ENCODE measurements at regions of chr17 and their contacts with region 1.

Region 1: DNA sequence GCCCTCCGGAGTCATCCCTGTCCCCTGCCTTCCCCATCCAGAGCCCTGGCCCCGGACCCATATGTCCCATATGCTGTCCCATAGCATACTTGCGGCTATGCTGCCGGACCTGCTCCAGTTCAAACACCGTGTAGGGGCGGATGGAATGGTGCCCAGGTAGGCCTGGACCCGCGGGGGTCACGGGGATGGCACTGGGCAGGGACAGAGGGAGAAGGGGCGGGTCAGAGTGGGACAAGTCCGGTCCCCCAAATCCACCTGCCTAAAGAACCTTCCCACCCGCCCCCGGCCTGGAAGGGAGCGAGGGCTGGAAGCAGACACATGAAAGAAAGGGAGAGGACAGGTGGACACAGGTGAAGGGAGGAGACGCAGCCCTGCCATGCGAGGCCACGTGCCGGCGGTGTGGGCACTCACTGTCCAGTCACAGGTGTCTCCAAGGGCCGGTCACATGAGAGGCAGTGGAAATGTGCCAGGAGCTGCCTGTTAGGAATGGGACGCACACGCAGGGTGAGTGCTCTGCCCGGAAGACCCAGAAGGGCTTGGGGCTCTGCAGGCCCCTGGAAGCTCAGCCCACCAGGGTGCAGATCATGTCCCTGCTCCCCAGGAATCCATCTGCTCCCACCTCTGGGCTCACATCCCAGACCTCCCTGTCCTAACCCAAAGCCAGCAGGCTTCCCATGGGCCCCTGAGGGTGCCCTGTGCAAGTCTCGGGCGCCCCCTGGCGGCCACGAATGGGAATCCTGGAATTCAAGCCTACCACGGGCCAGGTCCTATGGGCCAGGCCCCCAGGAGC is 14.0 kb downstream of the UBALD2 start:
- DNase-seq: peak; percentile 82
- H3K4me3 Mint-ChIP-seq: no peak overlapping the region
- H3K27ac Mint-ChIP-seq: no peak overlapping the region
- H3K4me1 Mint-ChIP-seq: peaks cover 6% of the 10 kb centered on the region
- H3K27me3 Mint-ChIP-seq: no peaks in the 10 kb centered on the region
- CTCF ChIP-seq: peak; percentile 96

Region 2: GRCh38 chr17:76014184-76014924 is 264.8 kb before region 1 on chr17:
- CTCF ChIA-PET with region 1: interaction called, 12 read pairs
- POLR2A ChIA-PET with region 1: interaction called, 4 read pairs
- intact Hi-C with region 1: loop called (anchors 1 kb)
- DNase-seq: peak; percentile 63
- H3K4me3 Mint-ChIP-seq: no peak overlapping the region
- H3K27ac Mint-ChIP-seq: no peak overlapping the region
- H3K4me1 Mint-ChIP-seq: no peaks in the 10 kb centered on the region
- H3K27me3 Mint-ChIP-seq: no peaks in the 10 kb centered on the region
- CTCF ChIP-seq: peak; percentile 95

Region 3: DNA sequence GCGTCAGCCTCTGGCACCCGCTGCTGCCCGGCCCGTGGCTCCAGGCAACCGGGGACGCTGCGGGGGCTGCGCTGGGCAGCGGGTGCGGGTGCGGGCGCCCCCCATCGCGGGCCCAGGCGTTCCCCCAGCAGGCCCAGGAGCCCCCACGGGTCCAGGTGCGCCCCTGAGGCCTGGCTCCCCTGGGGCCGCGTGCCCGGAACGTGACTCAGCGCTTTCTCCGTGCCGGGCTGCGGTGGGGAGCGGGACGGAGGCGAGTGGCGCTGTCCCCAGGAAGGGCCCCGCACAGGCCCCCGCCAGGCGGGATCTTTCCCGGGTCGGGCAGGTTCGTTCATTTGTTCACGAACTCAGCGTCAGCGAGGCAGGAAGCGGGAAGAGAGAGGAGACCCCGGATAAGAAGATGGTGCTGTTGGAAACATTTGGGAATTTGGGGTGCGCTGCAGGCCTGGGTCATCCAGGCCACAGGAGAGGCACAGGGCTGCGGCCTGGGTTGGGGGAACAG is 157.2 kb before region 1 on chr17:
- CTCF ChIA-PET with region 1: interaction called, 82 read pairs
- POLR2A ChIA-PET with region 1: interaction called, 4 read pairs
- intact Hi-C with region 1: loop called (anchors 1 kb)
- DNase-seq: no peak
- H3K4me3 Mint-ChIP-seq: no peak overlapping the region
- H3K27ac Mint-ChIP-seq: no peak overlapping the region
- H3K4me1 Mint-ChIP-seq: no peaks in the 10 kb centered on the region
- H3K27me3 Mint-ChIP-seq: no peaks in the 10 kb centered on the region
- CTCF ChIP-seq: no peak

Region 4: DNA sequence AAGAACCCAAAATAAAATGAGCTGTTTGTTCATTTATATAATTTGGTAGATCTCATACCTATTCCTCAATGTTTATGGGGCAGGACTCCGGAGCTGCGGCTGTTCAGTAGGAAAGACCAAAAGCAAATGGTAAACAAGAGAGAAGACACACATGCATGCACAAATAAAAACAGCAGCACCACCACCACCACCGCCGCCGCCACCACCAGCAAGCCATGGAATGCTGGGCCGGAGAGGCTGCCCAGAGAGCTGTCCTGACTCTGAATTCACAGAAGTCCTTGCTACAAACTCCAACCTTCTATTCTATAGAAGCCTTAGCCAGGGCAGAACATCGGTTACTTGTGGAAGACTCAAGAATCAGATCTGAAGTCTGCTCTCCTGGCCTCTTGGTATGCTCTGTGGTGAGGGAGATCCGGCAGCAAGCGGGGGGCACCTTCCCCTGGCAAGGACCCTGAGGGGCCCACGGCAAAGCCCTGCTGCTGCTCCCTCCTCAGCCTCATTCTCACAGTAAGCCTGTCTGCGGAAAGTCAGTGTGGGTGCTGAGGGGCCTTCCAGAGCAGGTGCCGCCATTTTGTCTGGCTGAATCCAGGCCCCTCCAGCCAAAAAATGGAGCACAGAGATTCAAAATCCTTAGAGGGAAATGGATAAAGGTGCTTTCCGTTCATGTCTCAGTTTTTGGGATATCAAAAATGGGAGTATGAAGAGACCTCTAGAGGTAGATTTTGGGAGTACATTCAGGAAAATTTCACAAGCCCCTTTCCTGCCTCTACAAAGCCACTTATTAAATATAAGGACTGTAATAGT is 131.7 kb before region 1 on chr17:
- CTCF ChIA-PET with region 1: interaction called, 18 read pairs
- POLR2A ChIA-PET with region 1: no interaction called
- intact Hi-C with region 1: no loop called
- DNase-seq: peak; percentile 53
- H3K4me3 Mint-ChIP-seq: no peak overlapping the region
- H3K27ac Mint-ChIP-seq: no peak overlapping the region
- H3K4me1 Mint-ChIP-seq: no peaks in the 10 kb centered on the region
- H3K27me3 Mint-ChIP-seq: no peaks in the 10 kb centered on the region
- CTCF ChIP-seq: peak; percentile 48

Region 5: GRCh38 chr17:76246080-76247066 is 32.8 kb before region 1 on chr17:
- CTCF ChIA-PET with region 1: interaction called, 16 read pairs
- POLR2A ChIA-PET with region 1: no interaction called
- intact Hi-C with region 1: no loop called
- DNase-seq: no peak
- H3K4me3 Mint-ChIP-seq: no peak overlapping the region
- H3K27ac Mint-ChIP-seq: no peak overlapping the region
- H3K4me1 Mint-ChIP-seq: peaks cover 9% of the 10 kb centered on the region
- H3K27me3 Mint-ChIP-seq: peaks cover 2% of the 10 kb centered on the region
- CTCF ChIP-seq: no peak

Region 6: DNA sequence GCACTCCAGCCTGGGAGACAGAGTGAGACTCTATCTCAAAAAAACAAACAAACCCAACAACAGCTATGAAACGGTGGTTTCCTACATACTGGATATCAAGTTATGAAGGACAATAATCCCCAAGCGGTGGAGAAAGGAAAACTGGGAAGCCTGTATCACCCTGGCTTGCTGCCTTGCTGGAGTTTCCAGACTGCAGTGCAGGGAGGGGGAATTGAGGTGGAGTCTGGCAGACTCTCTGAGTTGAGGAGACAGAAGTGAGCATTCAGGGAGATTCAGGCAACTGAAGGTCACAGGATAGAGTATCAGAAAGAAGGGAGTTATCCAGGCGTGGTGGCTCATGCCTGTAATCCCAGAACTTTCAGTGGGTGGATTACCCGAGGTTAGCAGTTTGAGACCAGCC is 17.0 kb after region 1 on chr17:
- CTCF ChIA-PET with region 1: interaction called, 41 read pairs
- POLR2A ChIA-PET with region 1: interaction called, 3 read pairs
- intact Hi-C with region 1: no loop called
- DNase-seq: no peak
- H3K4me3 Mint-ChIP-seq: no peak overlapping the region
- H3K27ac Mint-ChIP-seq: no peak overlapping the region
- H3K4me1 Mint-ChIP-seq: no peaks in the 10 kb centered on the region
- H3K27me3 Mint-ChIP-seq: no peaks in the 10 kb centered on the region
- CTCF ChIP-seq: no peak

Region 7: GRCh38 chr17:76452660-76453430 is 173.7 kb after region 1 on chr17 and contains the start of gene UBE2O:
- CTCF ChIA-PET with region 1: no interaction called
- POLR2A ChIA-PET with region 1: no interaction called
- intact Hi-C with region 1: no loop called
- DNase-seq: peak; percentile 80
- H3K4me3 Mint-ChIP-seq: peak within 1 kb of the TSS; percentile 76
- H3K27ac Mint-ChIP-seq: peak within 1 kb of the TSS; percentile 11
- H3K4me1 Mint-ChIP-seq: peaks cover 13% of the 10 kb centered on the region
- H3K27me3 Mint-ChIP-seq: no peaks in the 10 kb centered on the region
- CTCF ChIP-seq: no peak
- total RNA-seq, gene UBE2O: 16.2 and 19.5 TPM in 2 replicates

Region 8: DNA sequence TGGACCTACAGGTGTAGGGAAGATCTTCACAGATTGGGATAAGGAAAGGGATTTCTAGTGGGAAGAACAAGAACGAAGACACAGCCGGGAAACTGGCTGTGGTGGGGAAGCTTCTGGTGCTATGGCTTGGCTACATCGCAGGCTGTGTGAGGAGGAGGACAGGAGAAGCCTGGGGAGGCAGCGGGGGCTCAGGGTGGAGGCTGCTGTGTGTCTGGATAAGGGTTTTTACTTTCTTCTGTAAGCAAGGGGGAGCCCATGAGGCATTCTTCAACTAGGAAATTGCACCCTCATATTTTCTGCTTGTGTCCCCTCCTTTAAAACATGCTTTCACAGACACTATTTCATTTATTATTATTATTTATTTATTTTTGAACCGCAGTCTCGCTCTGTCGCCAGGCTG is 225.0 kb after region 1 on chr17:
- CTCF ChIA-PET with region 1: no interaction called
- POLR2A ChIA-PET with region 1: no interaction called
- intact Hi-C with region 1: no loop called
- DNase-seq: no peak
- H3K4me3 Mint-ChIP-seq: no peak overlapping the region
- H3K27ac Mint-ChIP-seq: no peak overlapping the region
- H3K4me1 Mint-ChIP-seq: peaks cover 14% of the 10 kb centered on the region
- H3K27me3 Mint-ChIP-seq: peaks cover 14% of the 10 kb centered on the region
- CTCF ChIP-seq: no peak

Region 9: GRCh38 chr17:76631829-76632565 is 352.9 kb after region 1 on chr17:
- CTCF ChIA-PET with region 1: no interaction called
- POLR2A ChIA-PET with region 1: no interaction called
- intact Hi-C with region 1: no loop called
- DNase-seq: no peak
- H3K4me3 Mint-ChIP-seq: no peak overlapping the region
- H3K27ac Mint-ChIP-seq: no peak overlapping the region
- H3K4me1 Mint-ChIP-seq: no peaks in the 10 kb centered on the region
- H3K27me3 Mint-ChIP-seq: no peaks in the 10 kb centered on the region
- CTCF ChIP-seq: no peak

Measured in MCF 10A (cell line).